Mammary epithelial cell (primary cell): ENCODE measurements at regions of chr16 and their contacts with region 1.

Region 1: DNA sequence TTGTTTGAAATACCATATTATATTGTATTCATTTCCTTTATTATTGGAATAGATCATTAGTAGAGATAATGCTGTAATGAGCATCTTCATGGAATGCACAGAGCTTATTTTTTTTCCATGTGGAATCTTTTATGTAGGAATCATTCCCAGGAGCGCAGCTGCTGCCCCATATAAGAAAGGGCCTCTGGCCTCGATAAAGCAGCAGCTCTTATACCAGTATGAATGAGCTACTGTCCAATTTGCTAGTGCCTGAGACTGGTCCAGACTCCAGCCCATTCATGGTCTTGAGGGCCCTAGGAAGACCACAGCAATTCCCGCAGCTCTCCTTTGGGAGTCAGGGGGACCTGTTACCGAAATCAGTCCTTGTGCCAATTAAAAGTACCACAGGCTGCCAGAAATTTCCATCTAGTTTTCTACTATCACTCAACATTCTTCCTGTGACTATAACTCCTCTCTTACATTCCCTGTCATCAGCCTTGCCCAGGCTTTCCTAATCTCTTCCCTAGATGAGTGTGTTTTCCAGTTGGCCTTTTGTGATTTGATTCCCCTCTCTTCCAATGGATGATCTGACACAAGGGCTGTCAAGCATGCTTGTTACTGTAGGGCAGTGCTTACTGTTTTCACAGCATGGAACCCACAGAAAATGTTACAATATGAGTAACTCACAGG is 1.9 kb downstream of the ZNF843 start:
- DNase-seq: no peak
- H3K4me3 ChIP-seq: no peak overlapping the region
- H3K27ac ChIP-seq: no peak overlapping the region
- H3K4me1 ChIP-seq: peaks cover 4% of the 10 kb centered on the region
- H3K27me3 ChIP-seq: no peaks in the 10 kb centered on the region
- CTCF ChIP-seq: no peak

Region 2: DNA sequence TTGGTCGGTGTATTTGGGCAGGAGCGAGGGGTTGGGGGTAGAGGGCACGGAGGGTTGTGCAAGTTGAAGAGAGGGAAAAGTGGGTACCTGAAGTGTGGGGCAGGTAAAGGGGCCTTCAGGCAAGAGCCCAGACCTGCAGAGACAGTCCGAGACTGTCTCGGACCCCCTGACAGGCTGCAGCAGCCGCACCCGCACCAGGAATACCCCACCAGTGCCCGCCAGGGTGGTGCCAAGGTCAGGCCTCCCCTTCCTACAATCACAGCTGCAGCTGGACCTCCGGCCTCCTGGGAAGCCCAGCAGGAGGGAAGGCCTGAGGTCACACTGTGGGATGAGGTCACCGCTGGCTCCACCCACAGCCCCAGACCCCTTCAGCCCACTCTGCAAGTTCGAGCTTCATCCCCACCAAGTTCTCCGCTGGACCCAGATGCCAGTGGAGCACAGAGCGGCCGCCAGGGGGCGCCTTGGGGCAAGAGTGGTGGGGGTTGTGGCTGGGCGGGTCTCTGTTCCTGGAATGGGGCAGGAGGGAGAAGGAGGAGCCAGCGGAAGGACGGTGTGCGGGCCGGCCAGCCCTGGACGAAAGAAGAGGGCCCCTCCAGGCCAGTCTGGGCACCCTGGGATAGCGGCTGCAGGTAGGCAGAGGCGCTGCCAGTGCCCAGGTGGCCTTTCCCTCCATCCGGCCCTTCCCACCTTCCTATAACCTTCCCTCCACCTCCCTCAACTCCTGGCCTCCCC is 455.8 kb before region 1 on chr16 and contains the start of gene HSD3B7:
- CTCF ChIA-PET with region 1: no interaction called
- dilution Hi-C with region 1: no loop called
- in situ Hi-C with region 1: loop called (anchors 5 to 25 kb)
- intact Hi-C with region 1: loop called (anchors 1 kb)
- DNase-seq: peak; percentile 64
- H3K4me3 ChIP-seq: peak within 1 kb of the TSS; percentile 22 to 54 (median 44)
- H3K27ac ChIP-seq: no peak within 1 kb of the TSS
- H3K4me1 ChIP-seq: peaks cover 12% of the 10 kb centered on the region
- H3K27me3 ChIP-seq: no peaks in the 10 kb centered on the region
- CTCF ChIP-seq: peak; percentile 84 to 96
- total RNA-seq, gene HSD3B7: 3.8 to 3.9 TPM

Region 3: DNA sequence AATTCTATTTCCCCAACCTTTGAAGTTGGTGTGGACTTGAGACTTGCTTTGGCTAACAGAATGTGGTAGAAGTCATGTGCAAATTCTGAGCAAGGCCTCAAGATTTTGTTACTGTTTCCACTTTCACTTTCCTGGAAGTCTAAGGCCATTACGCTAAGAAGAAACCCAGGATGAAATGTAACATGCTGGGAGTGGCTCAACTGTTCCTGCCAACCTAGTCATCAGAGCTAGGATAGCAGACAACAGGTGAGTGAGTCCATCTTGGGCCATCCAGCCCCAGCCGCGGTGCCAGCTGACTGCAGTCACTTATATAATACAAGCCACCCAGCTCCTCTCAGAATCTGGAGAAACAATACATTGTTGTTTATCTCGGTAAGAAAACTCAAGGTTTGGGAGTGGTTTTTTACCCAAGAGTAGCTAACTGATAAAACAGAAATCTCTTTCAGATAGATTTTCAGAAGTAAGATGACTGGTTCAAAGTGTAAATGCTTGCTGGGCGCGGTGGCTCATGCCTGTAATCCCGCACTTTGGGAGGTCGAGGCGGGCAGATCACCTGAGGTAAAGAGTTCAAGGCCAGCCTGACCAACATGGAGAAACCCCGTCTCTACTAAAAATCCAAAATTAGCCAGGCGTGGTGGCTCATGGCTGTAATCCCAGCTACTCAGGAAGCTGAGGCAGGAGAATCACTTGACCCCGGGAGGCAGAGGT is 418.0 kb before region 1 on chr16:
- CTCF ChIA-PET with region 1: interaction called, 25 read pairs
- dilution Hi-C with region 1: no loop called
- in situ Hi-C with region 1: no loop called
- intact Hi-C with region 1: no loop called
- DNase-seq: no peak
- H3K4me3 ChIP-seq: no peak overlapping the region
- H3K27ac ChIP-seq: no peak overlapping the region
- H3K4me1 ChIP-seq: no peaks in the 10 kb centered on the region
- H3K27me3 ChIP-seq: no peaks in the 10 kb centered on the region
- CTCF ChIP-seq: no peak

Region 4: GRCh38 chr16:31117391-31118197 is 323.1 kb before region 1 on chr16 and contains the start of gene KAT8:
- CTCF ChIA-PET with region 1: no interaction called
- dilution Hi-C with region 1: no loop called
- in situ Hi-C with region 1: no loop called
- intact Hi-C with region 1: loop called (anchors 5 kb)
- DNase-seq: peak; percentile 98
- H3K4me3 ChIP-seq: peak within 1 kb of the TSS; percentile 57 to 80 (median 65)
- H3K27ac ChIP-seq: peak within 1 kb of the TSS; percentile 100
- H3K4me1 ChIP-seq: peaks cover 14% of the 10 kb centered on the region
- H3K27me3 ChIP-seq: no peaks in the 10 kb centered on the region
- CTCF ChIP-seq: no peak
- total RNA-seq, gene KAT8: 22.7 to 34.0 TPM

Region 5: GRCh38 chr16:31157136-31157535 is 283.5 kb before region 1 on chr16:
- CTCF ChIA-PET with region 1: no interaction called
- dilution Hi-C with region 1: no loop called
- in situ Hi-C with region 1: no loop called
- intact Hi-C with region 1: loop called (anchors 5 kb)
- DNase-seq: no peak
- H3K4me3 ChIP-seq: no peak overlapping the region
- H3K27ac ChIP-seq: no peak overlapping the region
- H3K4me1 ChIP-seq: no peaks in the 10 kb centered on the region
- H3K27me3 ChIP-seq: no peaks in the 10 kb centered on the region
- CTCF ChIP-seq: no peak

Region 6: GRCh38 chr16:31202414-31203375 is 238.0 kb before region 1 on chr16 and contains the start of gene PYCARD:
- CTCF ChIA-PET with region 1: no interaction called
- dilution Hi-C with region 1: no loop called
- in situ Hi-C with region 1: no loop called
- intact Hi-C with region 1: loop called (anchors 5 kb)
- DNase-seq: peak; percentile 49
- H3K4me3 ChIP-seq: peak within 1 kb of the TSS; percentile 49 to 90 (median 56)
- H3K27ac ChIP-seq: peak within 1 kb of the TSS; percentile 45
- H3K4me1 ChIP-seq: peaks cover 16% of the 10 kb centered on the region
- H3K27me3 ChIP-seq: no peaks in the 10 kb centered on the region
- CTCF ChIP-seq: no peak
- total RNA-seq, gene PYCARD: 30.3 to 38.8 TPM

Region 7: DNA sequence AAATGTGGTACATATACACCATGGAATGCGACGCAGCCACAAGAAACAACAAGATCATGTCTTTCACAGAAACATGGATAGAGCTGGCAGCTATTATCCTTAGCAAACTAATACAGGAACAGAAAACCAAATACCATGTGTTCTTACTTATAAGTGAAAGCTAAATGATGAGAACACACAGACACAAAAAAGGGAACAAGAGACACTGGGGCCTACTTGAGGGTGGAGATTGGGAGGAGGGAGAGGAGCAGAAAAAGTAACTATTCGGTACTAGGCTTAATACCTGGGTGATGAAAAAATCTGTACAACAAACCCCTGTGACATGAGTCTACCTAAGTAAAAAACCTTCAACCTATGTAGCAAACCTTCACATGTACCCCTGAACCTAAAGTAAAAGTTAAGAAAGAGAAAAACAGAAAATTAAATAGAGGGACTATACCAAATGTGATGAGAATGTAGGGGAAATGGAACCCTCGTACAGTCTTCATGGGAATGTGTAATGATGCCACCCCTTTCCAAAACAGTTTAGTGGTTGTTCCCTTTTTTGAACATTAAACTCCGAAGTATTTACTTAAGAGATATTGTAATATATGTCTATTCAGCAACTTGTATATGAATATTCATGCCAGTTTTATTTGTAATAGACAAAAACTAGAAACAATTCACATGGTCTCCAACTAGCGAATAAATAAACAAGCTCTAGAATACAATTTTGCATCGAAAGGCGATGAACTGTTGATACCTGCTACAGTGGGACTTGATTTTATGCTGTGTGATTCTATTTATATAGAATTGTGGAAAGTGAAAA is 121.0 kb after region 1 on chr16:
- CTCF ChIA-PET with region 1: no interaction called
- dilution Hi-C with region 1: no loop called
- in situ Hi-C with region 1: no loop called
- intact Hi-C with region 1: no loop called
- DNase-seq: no peak
- H3K4me3 ChIP-seq: no peak overlapping the region
- H3K27ac ChIP-seq: no peak overlapping the region
- H3K4me1 ChIP-seq: no peaks in the 10 kb centered on the region
- H3K27me3 ChIP-seq: no peaks in the 10 kb centered on the region
- CTCF ChIP-seq: no peak